GM12878 (cell line): ENCODE measurements at regions of chr3 and their contacts with region 1.

Region 1: GRCh38 chr3:159322322-159322939 is 520.6 kb downstream of the MFSD1 start:
- DNase-seq: no peak
- ATAC-seq: peak; percentile 89
- H3K4me3 ChIP-seq: no peak overlapping the region
- H3K27ac ChIP-seq: no peak overlapping the region
- H3K4me1 ChIP-seq: no peaks in the 10 kb centered on the region
- H3K27me3 ChIP-seq: no peaks in the 10 kb centered on the region
- CTCF ChIP-seq: peak; percentile 68 to 90 (median 88)
- EP300 ChIP-seq: no peak
- POLR2A ChIP-seq: no peak
- RAD21 ChIP-seq: peak; percentile 65

Region 2: DNA sequence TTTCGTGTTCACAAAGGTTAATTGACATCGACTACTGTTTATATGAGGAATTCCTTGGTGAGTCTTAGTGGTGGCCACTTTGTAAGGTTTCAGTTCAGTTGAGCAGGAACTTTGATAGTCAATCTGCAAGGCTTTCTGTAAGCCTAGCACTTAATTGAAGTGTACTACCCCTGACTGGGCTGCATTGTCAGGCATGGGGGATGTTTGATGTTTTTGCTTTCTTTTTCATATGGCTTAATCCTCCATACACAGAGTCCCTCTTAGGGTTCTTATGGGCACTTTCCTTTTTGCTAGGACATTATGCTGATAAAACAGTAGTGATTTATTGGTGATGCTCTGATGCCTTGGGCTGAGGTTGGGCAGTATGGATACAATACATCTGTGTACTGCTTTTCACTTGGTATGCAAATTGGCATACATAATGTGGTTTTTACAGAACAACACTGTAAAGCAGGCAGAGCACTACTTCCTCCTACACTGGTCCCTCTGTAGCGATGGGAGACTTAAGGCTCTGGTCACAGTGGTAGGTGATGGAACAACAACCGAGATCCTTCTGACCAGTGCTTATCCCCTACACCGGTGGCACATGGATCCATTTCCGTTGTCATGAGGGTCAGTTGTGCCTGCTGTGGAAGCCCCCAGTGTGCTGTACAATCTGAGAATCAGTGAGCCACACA is 259.6 kb before region 1 on chr3:
- CTCF ChIA-PET with region 1: no interaction called
- POLR2A ChIA-PET with region 1: no interaction called
- RAD21 ChIA-PET with region 1: no interaction called
- SMC1A ChIA-PET with region 1: no interaction called
- in situ Hi-C with region 1: no loop called
- intact Hi-C with region 1: no loop called
- DNase-seq: no peak
- ATAC-seq: peak; percentile 36
- H3K4me3 ChIP-seq: no peak overlapping the region
- H3K27ac ChIP-seq: no peak overlapping the region
- H3K4me1 ChIP-seq: no peaks in the 10 kb centered on the region
- H3K27me3 ChIP-seq: no peaks in the 10 kb centered on the region
- CTCF ChIP-seq: no peak
- EP300 ChIP-seq: no peak
- POLR2A ChIP-seq: no peak
- RAD21 ChIP-seq: no peak

Region 3: GRCh38 chr3:159813822-159814523 is 491.5 kb after region 1 on chr3:
- CTCF ChIA-PET with region 1: no interaction called
- POLR2A ChIA-PET with region 1: no interaction called
- RAD21 ChIA-PET with region 1: no interaction called
- SMC1A ChIA-PET with region 1: no interaction called
- in situ Hi-C with region 1: loop called (anchors 5 kb)
- intact Hi-C with region 1: no loop called
- DNase-seq: no peak
- ATAC-seq: peak; percentile 28; the same call in 2 of the 3 replicates
- H3K4me3 ChIP-seq: no peak overlapping the region
- H3K27ac ChIP-seq: no peak overlapping the region
- H3K4me1 ChIP-seq: no peaks in the 10 kb centered on the region
- H3K27me3 ChIP-seq: no peaks in the 10 kb centered on the region; a peak in 1 of 4 replicates
- CTCF ChIP-seq: no peak
- EP300 ChIP-seq: no peak
- POLR2A ChIP-seq: no peak
- RAD21 ChIP-seq: no peak